ENCODE measurements at regions of chr5 and their contacts with region 1.

Region 1: DNA sequence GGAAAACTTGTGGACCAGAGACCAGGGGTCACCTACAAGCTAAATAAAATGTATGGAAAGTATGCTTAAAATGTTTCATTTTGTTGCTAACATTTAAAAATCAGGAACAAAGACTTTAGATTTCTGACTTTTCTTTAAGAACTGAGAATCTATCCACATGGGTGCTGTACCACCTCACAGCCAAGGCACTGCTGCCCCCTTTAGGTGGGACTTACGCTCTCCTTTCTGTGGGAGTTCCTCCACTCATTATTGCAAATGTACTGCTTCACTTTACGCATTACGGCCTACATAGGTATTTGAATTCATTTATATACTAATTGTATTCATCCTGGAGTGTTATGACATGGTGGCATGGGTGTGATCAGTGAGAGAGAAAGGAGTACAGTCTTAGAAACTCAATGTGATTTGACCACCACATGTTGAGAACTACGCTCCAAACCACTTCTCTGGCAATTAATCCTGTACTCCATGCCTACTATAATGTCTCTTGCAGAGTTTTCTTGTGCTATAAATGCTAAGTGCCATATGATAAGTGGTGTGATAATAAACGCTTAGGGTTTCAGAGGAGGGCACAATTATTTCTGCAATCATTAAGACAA is 24.7 kb upstream of the CETN3 start:
- DNase-seq: peak; percentile 25
- H3K4me3 ChIP-seq: no peak overlapping the region
- H3K27ac ChIP-seq: no peak overlapping the region
- H3K4me1 ChIP-seq: peaks cover 0 to 10% of the 10 kb centered on the region in 2 experiments; a peak in 2 of 4 replicates
- H3K27me3 ChIP-seq: no peaks in the 10 kb centered on the region
- CTCF ChIP-seq: peak; percentile 71
- EP300 ChIP-seq: no peak
- RAD21 ChIP-seq: peak; percentile 82

Region 2: DNA sequence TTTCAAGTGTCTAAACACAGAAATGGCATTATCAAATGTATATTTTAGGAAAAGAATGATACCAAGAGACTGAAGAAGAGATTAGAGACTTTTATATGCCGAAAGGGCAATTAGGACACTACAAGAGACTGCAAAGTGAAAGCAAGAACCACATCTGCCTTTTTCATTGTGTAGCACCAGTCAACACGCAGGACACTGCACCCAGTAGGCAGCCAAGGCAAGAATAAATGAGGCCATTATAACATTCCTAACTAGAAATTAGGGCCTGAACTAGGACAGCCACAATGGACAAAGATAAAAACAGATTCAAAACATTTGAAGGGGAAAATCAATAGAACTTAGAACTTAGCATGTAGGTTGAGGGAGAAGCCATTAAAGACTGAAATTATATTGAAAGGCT is 35.5 kb before region 1 on chr5:
- CTCF ChIA-PET with region 1: no interaction called
- POLR2A ChIA-PET with region 1: no interaction called
- DNase-seq: no peak
- H3K4me3 ChIP-seq: no peak overlapping the region
- H3K27ac ChIP-seq: no peak overlapping the region
- H3K4me1 ChIP-seq: no peaks in the 10 kb centered on the region
- H3K27me3 ChIP-seq: no peaks in the 10 kb centered on the region
- CTCF ChIP-seq: no peak
- EP300 ChIP-seq: no peak
- RAD21 ChIP-seq: no peak

Region 3: DNA sequence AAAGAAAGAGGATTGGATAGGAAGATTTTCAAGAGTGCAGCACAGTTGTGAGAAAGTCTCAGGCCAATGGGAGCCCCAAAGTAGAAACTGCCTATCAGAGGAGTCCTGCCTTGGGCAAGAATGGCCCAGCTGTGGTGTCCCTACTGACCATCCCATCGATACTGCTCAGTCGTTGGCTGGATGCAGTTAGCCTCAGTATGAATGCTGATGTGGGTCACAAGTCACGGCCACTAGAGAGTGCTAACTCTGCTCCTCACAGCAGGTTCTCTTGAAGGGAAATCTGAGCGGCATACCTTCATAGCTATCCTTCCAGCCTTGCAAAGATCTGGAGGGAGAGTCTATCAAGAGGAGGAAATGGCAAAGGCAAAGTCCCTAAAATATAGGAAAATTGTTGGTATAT is 13.1 kb before region 1 on chr5:
- CTCF ChIA-PET with region 1: interaction called, 27 read pairs
- POLR2A ChIA-PET with region 1: no interaction called
- DNase-seq: no peak
- H3K4me3 ChIP-seq: no peak overlapping the region
- H3K27ac ChIP-seq: no peak overlapping the region
- H3K4me1 ChIP-seq: no peaks in the 10 kb centered on the region
- H3K27me3 ChIP-seq: no peaks in the 10 kb centered on the region
- CTCF ChIP-seq: no peak
- EP300 ChIP-seq: no peak
- RAD21 ChIP-seq: no peak

Region 4: DNA sequence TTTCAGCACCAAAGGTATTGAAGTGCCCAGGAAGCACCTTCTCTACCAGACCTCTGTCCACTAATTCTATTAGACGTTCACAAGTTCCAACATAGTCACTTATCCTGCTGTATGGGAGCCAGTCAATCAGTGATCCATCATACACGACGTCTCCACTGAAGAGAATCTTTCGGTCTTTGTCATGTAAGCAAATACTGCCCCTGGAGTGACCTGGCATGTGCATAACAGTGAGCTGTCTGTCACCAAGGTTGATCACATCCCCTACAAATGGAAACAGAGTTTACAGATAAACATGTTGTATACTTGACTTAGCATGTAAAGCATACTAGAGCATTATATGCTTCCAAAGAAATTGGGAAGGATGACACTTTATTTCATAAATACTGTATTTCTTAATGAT is 27.1 kb after region 1 on chr5:
- CTCF ChIA-PET with region 1: interaction called, 19 read pairs
- POLR2A ChIA-PET with region 1: no interaction called
- DNase-seq: no peak
- H3K4me3 ChIP-seq: no peak overlapping the region
- H3K27ac ChIP-seq: no peak overlapping the region
- H3K4me1 ChIP-seq: peaks cover 0 to 2% of the 10 kb centered on the region in 2 experiments; a peak in 2 of 4 replicates
- H3K27me3 ChIP-seq: no peaks in the 10 kb centered on the region
- CTCF ChIP-seq: no peak
- EP300 ChIP-seq: no peak
- RAD21 ChIP-seq: no peak

Region 5: GRCh38 chr5:90506221-90506620 is 72.0 kb after region 1 on chr5:
- CTCF ChIA-PET with region 1: no interaction called
- POLR2A ChIA-PET with region 1: no interaction called
- DNase-seq: no peak
- H3K4me3 ChIP-seq: no peak overlapping the region
- H3K27ac ChIP-seq: no peak overlapping the region
- H3K4me1 ChIP-seq: peaks cover 0 to 21% of the 10 kb centered on the region in 2 experiments; a peak in 2 of 4 replicates
- H3K27me3 ChIP-seq: no peaks in the 10 kb centered on the region
- CTCF ChIP-seq: no peak
- EP300 ChIP-seq: no peak
- RAD21 ChIP-seq: no peak

Region 6: DNA sequence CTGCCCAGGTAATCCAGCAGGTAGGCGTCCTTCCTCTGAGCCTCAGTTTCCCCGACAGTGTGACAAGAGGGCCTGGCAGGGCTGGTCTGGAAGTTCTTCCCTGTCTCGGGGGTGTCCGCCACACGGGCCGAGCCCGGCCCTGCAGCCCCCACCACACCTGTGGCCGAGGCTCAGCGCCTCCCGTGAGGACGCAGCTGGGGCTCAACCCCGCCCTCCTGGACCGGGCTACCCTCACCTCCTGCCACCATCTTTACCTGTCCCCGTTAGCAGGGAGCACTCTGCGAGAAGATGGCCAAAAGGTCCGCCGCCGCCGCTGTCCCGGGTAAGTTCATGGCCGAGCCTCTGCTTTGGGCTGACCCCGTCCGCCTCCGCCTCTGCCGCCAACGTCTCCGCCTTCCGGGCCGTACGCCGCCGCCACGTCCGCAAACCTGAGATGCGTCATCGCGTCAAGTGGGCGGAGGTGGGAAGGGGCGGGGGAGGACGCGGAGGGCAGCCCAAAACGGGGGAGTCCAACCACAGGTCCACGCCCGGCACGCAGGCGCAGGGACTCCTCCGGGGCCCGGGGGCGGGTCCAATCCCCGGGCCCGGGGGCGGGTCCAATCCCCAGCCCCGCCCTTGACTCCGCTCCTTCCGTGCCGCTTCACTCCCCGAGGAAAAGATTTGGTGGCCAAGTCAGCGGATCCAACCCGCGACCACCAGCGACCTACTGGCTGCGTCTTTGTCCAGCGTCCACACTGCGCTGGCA is 95.2 kb after region 1 on chr5 and contains the start of gene LYSMD3:
- CTCF ChIA-PET with region 1: interaction called, 32 read pairs
- POLR2A ChIA-PET with region 1: no interaction called
- DNase-seq: peak; percentile 99
- H3K4me3 ChIP-seq: peak within 1 kb of the TSS; percentile 99 to 100
- H3K27ac ChIP-seq: peak within 1 kb of the TSS; percentile 79 to 91
- H3K4me1 ChIP-seq: peaks cover 0 to 5% of the 10 kb centered on the region in 2 experiments; a peak in 3 of 4 replicates
- H3K27me3 ChIP-seq: peaks cover 11% of the 10 kb centered on the region
- CTCF ChIP-seq: no peak
- EP300 ChIP-seq: no peak
- RAD21 ChIP-seq: no peak
- polyA plus RNA-seq, gene LYSMD3: 5.2 and 6.7 TPM in 2 replicates